AG04449 (cell line): ENCODE measurements at regions of chr1 and their contacts with region 1.

Region 1: GRCh38 chr1:117067533-117068370 is 7.6 kb downstream of the TTF2 start:
- DNase-seq: no peak
- H3K4me3 ChIP-seq: no peak overlapping the region
- CTCF ChIP-seq: peak; percentile 77

Region 2: DNA sequence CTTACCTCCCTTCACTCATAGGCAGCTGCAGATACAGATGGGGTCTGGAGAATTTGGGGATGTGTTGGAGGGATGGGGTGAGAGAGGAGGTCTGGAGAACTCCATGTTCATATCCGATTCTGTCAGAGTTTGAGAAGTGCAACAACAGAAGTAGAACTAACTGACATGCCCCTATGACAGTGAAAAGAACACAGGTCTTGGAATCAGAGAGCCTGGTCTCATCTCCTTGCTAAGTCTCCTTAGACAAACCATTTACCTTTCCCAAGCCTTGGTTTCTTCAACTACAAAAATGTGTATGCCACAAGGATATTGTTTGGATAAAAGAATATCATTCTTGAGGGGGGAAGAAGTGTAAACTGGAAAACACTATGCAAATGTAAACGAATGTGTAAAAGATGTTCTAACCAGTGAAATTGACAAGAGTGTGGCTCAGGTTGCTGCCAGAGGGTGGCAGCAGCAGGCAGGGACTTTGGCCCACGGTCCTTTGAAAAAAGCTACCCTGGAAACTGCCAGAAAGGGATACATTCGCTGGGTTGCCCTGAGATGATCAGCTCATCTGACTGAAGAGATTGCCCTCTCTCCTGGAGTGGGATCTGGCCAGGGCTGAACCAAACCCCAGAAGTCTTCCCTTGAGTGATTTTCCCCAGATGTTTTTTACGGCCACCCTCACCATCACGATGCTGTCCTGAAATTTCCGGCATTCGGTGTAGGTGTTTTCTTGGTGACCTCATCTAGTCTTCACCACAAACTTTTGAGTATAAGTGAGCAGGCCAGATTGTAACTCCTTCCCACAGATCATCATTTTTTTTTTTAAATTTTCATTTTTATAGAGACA is 330.5 kb before region 1 on chr1:
- CTCF ChIA-PET with region 1: interaction called, 33 read pairs
- POLR2A ChIA-PET with region 1: no interaction called
- DNase-seq: no peak
- H3K4me3 ChIP-seq: no peak overlapping the region
- CTCF ChIP-seq: peak; percentile 77

Region 3: DNA sequence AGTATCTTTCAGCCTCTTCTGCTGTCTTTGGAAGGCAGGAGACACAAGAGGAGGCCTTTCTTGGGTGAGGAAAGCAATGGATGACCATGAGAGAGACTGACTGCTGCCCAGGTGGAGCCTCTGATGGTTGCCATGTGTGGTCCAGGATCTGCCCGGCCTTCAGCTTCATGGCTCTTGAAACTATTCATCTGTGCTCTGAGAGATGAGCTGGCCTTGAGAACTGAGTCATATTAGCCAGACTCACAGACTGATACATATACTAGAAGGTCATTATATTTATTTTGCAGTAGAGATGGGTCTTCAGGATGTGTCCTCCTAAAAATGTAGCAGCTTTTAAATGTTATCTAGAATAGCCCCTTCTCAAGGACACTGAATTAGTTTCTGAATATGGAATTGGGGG is 124.3 kb before region 1 on chr1:
- CTCF ChIA-PET with region 1: no interaction called
- POLR2A ChIA-PET with region 1: no interaction called
- DNase-seq: no peak
- H3K4me3 ChIP-seq: no peak overlapping the region
- CTCF ChIP-seq: no peak

Region 4: GRCh38 chr1:117093870-117094621 is 26.3 kb after region 1 on chr1:
- CTCF ChIA-PET with region 1: interaction called, 65 read pairs
- POLR2A ChIA-PET with region 1: no interaction called
- DNase-seq: no peak
- H3K4me3 ChIP-seq: no peak overlapping the region
- CTCF ChIP-seq: peak; percentile 28

Region 5: GRCh38 chr1:117121776-117122697 is 54.3 kb after region 1 on chr1:
- CTCF ChIA-PET with region 1: interaction called, 592 read pairs
- POLR2A ChIA-PET with region 1: no interaction called
- DNase-seq: peak; percentile 77
- H3K4me3 ChIP-seq: peak overlapping the region; percentile 93
- CTCF ChIP-seq: peak; percentile 91

Region 6: GRCh38 chr1:117137316-117137855 is 69.6 kb after region 1 on chr1:
- CTCF ChIA-PET with region 1: interaction called, 62 read pairs
- POLR2A ChIA-PET with region 1: no interaction called
- DNase-seq: no peak
- H3K4me3 ChIP-seq: no peak overlapping the region
- CTCF ChIP-seq: no peak

Region 7: GRCh38 chr1:117275055-117275454 is 207.3 kb after region 1 on chr1:
- CTCF ChIA-PET with region 1: interaction called, 340 read pairs
- POLR2A ChIA-PET with region 1: no interaction called
- DNase-seq: no peak
- H3K4me3 ChIP-seq: no peak overlapping the region
- CTCF ChIP-seq: no peak